Posterior vena cava (tissue), 2 donors: ENCODE measurements at regions of chr1 and their contacts with region 1.

Region 1: DNA sequence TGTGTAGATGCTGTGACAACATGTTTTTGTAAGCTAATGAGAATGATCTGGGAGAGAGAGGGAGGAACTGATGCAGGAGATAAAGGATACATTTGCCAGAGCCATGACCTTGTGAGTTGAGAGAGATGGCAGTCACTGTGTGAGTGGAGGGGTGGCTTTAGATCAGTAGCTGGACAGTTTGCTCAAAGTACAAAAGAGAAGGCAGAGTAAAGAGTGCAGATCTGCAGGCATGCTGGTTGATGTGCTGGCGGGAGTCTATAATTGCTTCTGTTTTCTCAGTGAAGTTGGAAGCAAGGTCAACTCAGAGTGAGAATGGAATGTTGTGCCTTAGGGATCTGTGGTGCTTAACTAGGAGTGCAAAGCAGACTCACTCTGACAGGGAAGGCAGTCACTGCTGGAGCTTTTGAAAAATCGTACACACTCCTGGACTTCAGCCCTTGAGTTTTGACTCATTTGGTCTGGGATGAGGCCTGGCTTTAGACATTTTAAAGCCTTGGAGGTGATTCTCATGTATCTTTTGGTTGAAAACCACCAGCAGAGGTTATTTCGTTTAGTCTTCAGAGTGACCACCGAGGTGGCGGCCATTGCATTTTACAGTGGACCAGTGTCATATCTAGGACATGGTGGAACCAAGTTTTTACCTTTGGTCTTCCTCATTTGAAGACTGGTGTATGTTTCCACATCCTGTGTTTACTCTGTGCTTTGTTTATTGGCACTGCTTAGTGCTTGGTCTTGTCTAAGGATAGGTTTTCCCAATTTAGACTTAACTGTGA is 49.6 kb downstream of the MTR start:
- DNase-seq: no peak

Region 2: DNA sequence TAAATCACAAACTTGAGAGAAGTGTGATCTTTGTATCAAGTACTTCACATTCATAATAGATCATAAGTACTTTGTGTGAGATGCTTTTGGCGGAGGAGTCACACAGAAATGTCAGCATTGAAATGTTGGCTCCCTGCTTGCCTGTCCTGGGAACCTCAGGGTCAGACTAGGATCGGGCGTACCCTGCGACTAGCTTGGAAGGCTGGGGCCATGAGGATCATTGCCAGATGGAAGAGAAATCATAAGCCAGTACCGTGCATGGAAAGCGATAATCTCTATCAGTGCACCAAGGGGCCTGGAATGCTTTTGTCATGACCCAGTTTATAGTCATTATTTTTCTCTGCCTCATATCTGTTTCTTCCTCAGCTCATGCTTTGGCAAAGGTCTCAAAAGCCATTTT is 14.1 kb before region 1 on chr1:
- intact Hi-C with region 1: loop called in 1 of 2 experiments (anchors 1 kb)
- DNase-seq: no peak